HepG2 (cell line): ENCODE measurements at regions of chr15 and their contacts with region 1.

Region 1: DNA sequence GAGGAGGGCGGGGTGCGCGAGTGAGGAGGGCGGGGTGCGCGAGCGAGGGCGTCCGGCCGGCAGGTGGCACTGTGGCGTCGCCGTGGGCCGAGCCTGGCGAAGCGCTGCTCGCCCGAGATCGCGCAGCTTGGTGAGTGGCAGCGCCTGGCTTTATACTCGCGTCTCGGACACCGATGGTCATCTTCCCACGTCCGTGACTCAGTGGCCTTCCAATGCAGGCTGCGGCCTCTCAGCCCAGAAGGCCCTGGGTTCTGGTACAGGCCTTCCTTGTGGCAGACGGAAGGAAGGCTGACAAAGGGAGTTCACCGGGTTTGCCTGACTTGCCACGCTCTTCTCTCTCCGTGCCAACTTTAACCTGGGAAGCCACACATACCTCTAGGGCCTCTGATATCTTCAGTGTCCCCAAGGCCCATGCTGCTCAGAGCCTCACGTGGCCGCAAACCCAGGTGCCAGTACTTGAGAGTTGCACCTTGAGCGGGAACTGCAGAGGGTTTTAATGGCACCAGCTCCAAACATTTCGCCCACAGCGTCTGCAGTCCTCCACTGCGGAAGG is 195.3 kb upstream of the LYSMD4 start:
- DNase-seq: no peak
- ATAC-seq: peak; percentile 89
- H3K4me3 ChIP-seq: peak overlapping the region; percentile 40 to 75 (median 40); a peak in 4 of 6 replicates
- H3K27ac ChIP-seq: no peak overlapping the region
- H3K4me1 ChIP-seq: peaks cover 8% of the 10 kb centered on the region; the same call in 1 of the 2 replicates
- H3K27me3 ChIP-seq: peaks cover 5 to 31% of the 10 kb centered on the region in 2 experiments; a peak in 4 of 5 replicates
- CTCF ChIP-seq: peak; percentile 84
- EP300 ChIP-seq: no peak
- POLR2A ChIP-seq: no peak
- RAD21 ChIP-seq: peak; percentile 80

Region 2: GRCh38 chr15:99906793-99907192 is 21.7 kb before region 1 on chr15:
- CTCF ChIA-PET with region 1: no interaction called
- POLR2A ChIA-PET with region 1: no interaction called
- in situ Hi-C with region 1: no loop called
- intact Hi-C with region 1: no loop called
- DNase-seq: no peak
- ATAC-seq: no peak
- H3K4me3 ChIP-seq: no peak overlapping the region
- H3K27ac ChIP-seq: no peak overlapping the region
- H3K4me1 ChIP-seq: no peaks in the 10 kb centered on the region
- H3K27me3 ChIP-seq: no peaks in the 10 kb centered on the region
- CTCF ChIP-seq: no peak
- EP300 ChIP-seq: no peak
- POLR2A ChIP-seq: no peak
- RAD21 ChIP-seq: no peak

Region 3: DNA sequence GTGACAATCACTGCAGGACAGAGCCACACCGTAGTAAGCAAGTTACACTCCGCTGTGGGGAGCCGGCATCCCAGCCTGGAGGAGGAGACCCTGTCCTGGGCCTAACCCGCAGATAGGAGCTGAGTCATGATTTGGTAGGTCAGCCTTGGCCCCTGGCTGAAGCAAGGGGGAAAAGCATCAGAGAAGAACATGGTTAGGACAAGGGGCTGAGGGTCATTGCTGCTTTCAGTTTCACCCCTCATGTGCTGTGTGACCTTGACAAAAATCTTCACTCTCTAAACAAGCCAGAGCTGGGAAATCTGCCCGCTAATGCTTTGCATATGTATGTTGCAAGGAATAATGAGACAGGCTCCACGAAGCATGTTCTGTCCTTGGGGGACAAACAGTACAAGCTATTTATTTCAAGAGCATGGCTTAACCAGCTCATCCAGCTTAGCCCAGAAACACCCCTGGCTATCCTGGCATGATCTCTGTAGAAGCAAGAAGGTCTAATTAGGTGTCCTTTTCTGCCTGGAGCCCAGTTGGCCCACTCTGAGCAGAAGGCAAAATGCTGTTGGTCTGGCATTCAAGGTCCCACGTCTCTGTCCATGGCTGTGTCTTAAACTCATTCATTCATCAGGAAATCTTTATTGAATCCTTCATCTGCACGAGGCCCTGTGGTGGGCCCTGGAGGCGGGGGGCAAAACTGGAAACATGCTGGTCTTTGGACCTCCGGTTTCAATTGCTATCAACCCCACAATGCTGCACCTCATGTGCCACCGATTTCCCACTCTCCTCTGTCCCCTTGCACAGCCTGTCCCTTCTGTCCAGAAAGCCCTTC is 26.1 kb after region 1 on chr15:
- CTCF ChIA-PET with region 1: no interaction called
- POLR2A ChIA-PET with region 1: no interaction called
- in situ Hi-C with region 1: no loop called
- intact Hi-C with region 1: no loop called
- DNase-seq: no peak
- ATAC-seq: peak; percentile 49
- H3K4me3 ChIP-seq: no peak overlapping the region
- H3K27ac ChIP-seq: no peak overlapping the region
- H3K4me1 ChIP-seq: no peaks in the 10 kb centered on the region
- H3K27me3 ChIP-seq: no peaks in the 10 kb centered on the region; a peak in 1 of 5 replicates
- CTCF ChIP-seq: no peak
- EP300 ChIP-seq: no peak
- POLR2A ChIP-seq: no peak
- RAD21 ChIP-seq: no peak

Region 4: GRCh38 chr15:100125401-100126191 is 197.1 kb after region 1 on chr15:
- CTCF ChIA-PET with region 1: no interaction called
- POLR2A ChIA-PET with region 1: no interaction called
- in situ Hi-C with region 1: loop called (anchors 10 kb)
- intact Hi-C with region 1: loop called (anchors 5 kb)
- DNase-seq: no peak
- ATAC-seq: no peak
- H3K4me3 ChIP-seq: no peak overlapping the region
- H3K27ac ChIP-seq: no peak overlapping the region
- H3K4me1 ChIP-seq: no peaks in the 10 kb centered on the region
- H3K27me3 ChIP-seq: no peaks in the 10 kb centered on the region; a peak in 1 of 5 replicates
- CTCF ChIP-seq: no peak
- EP300 ChIP-seq: no peak
- POLR2A ChIP-seq: no peak
- RAD21 ChIP-seq: no peak

Region 5: GRCh38 chr15:100131321-100132224 is 203.1 kb after region 1 on chr15:
- CTCF ChIA-PET with region 1: interaction called, 7 read pairs
- POLR2A ChIA-PET with region 1: no interaction called
- in situ Hi-C with region 1: loop called (anchors 10 kb)
- intact Hi-C with region 1: loop called (anchors 5 kb)
- DNase-seq: peak; percentile 61
- ATAC-seq: peak; percentile 98
- H3K4me3 ChIP-seq: peak overlapping the region in 2 of 3 experiments; percentile 41 to 55; a peak in 4 of 6 replicates
- H3K27ac ChIP-seq: no peak overlapping the region
- H3K4me1 ChIP-seq: peaks cover 14% of the 10 kb centered on the region
- H3K27me3 ChIP-seq: peaks cover 1 to 4% of the 10 kb centered on the region in 2 experiments; a peak in 1 of 5 replicates
- CTCF ChIP-seq: peak; percentile 87
- EP300 ChIP-seq: 0 out of 4 replicates have a peak, but pooled peaks of 1 of the 2 experiments have one; percentile 9
- POLR2A ChIP-seq: no peak
- RAD21 ChIP-seq: peak; percentile 68

Region 6: GRCh38 chr15:100349696-100350433 is 421.4 kb after region 1 on chr15:
- CTCF ChIA-PET with region 1: no interaction called
- POLR2A ChIA-PET with region 1: no interaction called
- in situ Hi-C with region 1: loop called (anchors 25 kb)
- intact Hi-C with region 1: no loop called
- DNase-seq: peak; percentile 76
- ATAC-seq: peak; percentile 96
- H3K4me3 ChIP-seq: peak overlapping the region; percentile 51 to 72 (median 53); a peak in 5 of 6 replicates
- H3K27ac ChIP-seq: peak overlapping the region; percentile 39
- H3K4me1 ChIP-seq: peaks cover 19% of the 10 kb centered on the region
- H3K27me3 ChIP-seq: no peaks in the 10 kb centered on the region; a peak in 2 of 5 replicates
- CTCF ChIP-seq: peak; percentile 90
- EP300 ChIP-seq: no peak
- POLR2A ChIP-seq: no peak
- RAD21 ChIP-seq: peak; percentile 62

Region 7: GRCh38 chr15:100383302-100384107 is 455.0 kb after region 1 on chr15:
- CTCF ChIA-PET with region 1: no interaction called
- POLR2A ChIA-PET with region 1: no interaction called
- in situ Hi-C with region 1: no loop called
- intact Hi-C with region 1: loop called (anchors 2 kb)
- DNase-seq: peak; percentile 41
- ATAC-seq: peak; percentile 82
- H3K4me3 ChIP-seq: no peak overlapping the region
- H3K27ac ChIP-seq: no peak overlapping the region
- H3K4me1 ChIP-seq: no peaks in the 10 kb centered on the region
- H3K27me3 ChIP-seq: peaks cover 0 to 3% of the 10 kb centered on the region in 2 experiments; a peak in 1 of 5 replicates
- CTCF ChIP-seq: peak; percentile 76
- EP300 ChIP-seq: no peak
- POLR2A ChIP-seq: no peak
- RAD21 ChIP-seq: peak; percentile 53; the same call in 1 of the 2 replicates